Activated T-helper 1 cell treated with anti-CD3 and anti-CD28 coated beads, Interleukin-12 subunit alpha, Interleukin-12 subunit beta, Interleukin-2, Interleukin-4 antibody, amounts not matched to agents 30 ng/mL and 10 ng/mL and 1 ng/mL, durations not matched to agents 14 hours and 24 hours and 36 hours (primary cell): ENCODE measurements at regions of chr4 and their contacts with region 1.

Region 1: GRCh38 chr4:36351082-36351666 is 69.8 kb downstream of the DTHD1 start:
- DNase-seq: peak; percentile 60
- H3K4me3 Mint-ChIP-seq: no peak overlapping the region
- H3K27ac Mint-ChIP-seq: no peak overlapping the region
- H3K4me1 Mint-ChIP-seq: peaks cover 40% of the 10 kb centered on the region
- H3K27me3 Mint-ChIP-seq: peaks cover 2% of the 10 kb centered on the region

Region 2: DNA sequence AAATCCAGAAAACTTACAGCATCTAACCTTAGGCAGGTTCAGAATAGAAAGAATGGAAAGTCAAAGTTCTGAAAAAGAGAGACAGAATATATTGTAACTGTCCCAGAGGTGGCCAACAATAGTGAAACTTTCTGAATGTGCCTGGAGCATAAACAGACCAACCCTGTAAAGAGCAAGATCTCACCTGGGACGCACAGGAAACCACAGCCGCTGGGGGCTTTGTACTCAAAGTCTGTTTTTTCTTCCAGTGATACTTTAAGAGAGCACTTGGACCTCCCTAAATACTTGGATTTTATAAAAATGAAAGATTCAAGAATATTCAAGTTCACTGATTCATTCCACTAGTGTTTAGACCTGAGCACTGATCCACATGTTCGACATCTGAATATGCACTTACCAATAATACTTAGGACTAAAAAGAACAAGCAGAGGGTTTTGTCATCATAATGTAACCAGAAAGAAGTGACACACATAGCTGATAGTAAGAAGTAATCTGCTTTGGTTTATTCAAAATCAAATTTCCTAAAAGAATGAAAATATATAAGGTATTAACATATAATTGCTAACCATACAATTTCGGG is 142.2 kb before region 1 on chr4:
- intact Hi-C with region 1: loop called (anchors 1 kb)
- DNase-seq: peak; percentile 10
- H3K4me3 Mint-ChIP-seq: peak overlapping the region; percentile 56
- H3K27ac Mint-ChIP-seq: peak overlapping the region; percentile 70
- H3K4me1 Mint-ChIP-seq: peaks cover 64% of the 10 kb centered on the region
- H3K27me3 Mint-ChIP-seq: no peaks in the 10 kb centered on the region

Region 3: GRCh38 chr4:36278789-36279188 is 72.4 kb before region 1 on chr4:
- intact Hi-C with region 1: loop called (anchors 1 kb)
- DNase-seq: no peak
- H3K4me3 Mint-ChIP-seq: peak overlapping the region; percentile 72
- H3K27ac Mint-ChIP-seq: peak overlapping the region; percentile 82
- H3K4me1 Mint-ChIP-seq: peaks cover 75% of the 10 kb centered on the region
- H3K27me3 Mint-ChIP-seq: no peaks in the 10 kb centered on the region

Region 4: DNA sequence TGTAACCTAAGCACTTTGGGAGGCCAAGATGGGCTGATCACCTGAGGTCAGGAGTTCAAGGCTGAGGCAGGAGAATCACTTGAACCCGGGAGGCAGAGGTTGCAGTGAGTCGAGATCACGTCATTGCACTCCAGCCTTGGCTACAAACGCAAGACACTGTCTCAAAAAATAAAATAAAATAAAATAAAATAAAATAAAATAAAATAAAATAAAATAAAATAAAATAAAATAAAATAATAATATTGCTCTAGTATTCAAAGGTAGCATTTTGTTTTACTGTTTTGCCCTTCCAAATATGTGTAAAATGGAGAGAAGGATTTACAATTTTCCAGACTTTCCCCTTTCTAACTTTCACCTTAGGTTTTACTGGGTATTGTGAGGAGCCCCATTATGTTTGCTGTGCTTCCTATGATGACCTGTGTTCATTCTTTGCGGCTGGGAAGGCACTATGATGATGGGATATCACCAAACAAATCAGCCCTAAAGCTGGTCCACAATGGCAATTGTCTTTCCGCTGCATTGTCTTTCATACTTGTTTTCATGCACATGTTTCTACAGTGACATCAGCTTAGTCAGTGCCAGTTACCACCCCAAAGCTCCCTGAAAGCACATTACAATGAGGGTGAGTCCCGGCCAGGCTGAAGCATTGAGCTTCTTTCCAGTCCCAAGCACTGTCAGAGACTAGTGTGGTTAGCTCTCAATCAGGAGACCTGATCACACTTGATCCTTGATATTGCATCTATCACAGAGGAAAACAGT is 19.0 kb before region 1 on chr4:
- intact Hi-C with region 1: loop called (anchors 1 kb)
- DNase-seq: no peak
- H3K4me3 Mint-ChIP-seq: no peak overlapping the region
- H3K27ac Mint-ChIP-seq: peak overlapping the region; percentile 66
- H3K4me1 Mint-ChIP-seq: peaks cover 35% of the 10 kb centered on the region
- H3K27me3 Mint-ChIP-seq: no peaks in the 10 kb centered on the region

Region 5: DNA sequence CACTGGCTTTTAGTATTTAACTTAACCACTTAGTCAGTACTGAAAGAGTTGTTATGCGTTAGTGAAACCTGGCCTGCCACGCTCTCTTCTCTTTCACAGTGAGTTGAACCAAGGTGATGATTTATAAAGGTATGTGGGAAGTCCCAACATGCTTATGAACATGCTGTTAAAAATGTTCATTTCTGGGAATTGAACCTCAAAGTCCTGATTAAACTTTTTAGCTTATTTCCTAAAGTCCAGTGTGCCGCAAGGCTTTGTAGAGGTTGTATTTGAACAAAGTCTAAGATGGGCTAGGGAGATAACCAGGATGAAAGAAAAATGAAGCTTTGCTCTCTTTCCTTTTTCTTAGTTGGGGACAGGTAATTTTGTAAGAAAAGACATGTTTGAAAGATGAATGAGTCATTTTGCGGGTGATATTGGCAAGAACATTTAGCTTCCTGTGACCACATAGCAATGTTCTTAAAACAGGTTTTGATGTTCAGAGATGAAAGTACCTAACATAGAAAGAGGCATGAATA is 200.6 kb after region 1 on chr4:
- intact Hi-C with region 1: loop called (anchors 5 kb)
- DNase-seq: no peak
- H3K4me3 Mint-ChIP-seq: no peak overlapping the region
- H3K27ac Mint-ChIP-seq: peak overlapping the region; percentile 28
- H3K4me1 Mint-ChIP-seq: peaks cover 7% of the 10 kb centered on the region
- H3K27me3 Mint-ChIP-seq: no peaks in the 10 kb centered on the region

Region 6: GRCh38 chr4:37389967-37390580 is 1038.9 kb after region 1 on chr4:
- intact Hi-C with region 1: loop called (anchors 1 kb)
- DNase-seq: no peak
- H3K4me3 Mint-ChIP-seq: no peak overlapping the region
- H3K27ac Mint-ChIP-seq: no peak overlapping the region
- H3K4me1 Mint-ChIP-seq: peaks cover 14% of the 10 kb centered on the region
- H3K27me3 Mint-ChIP-seq: peaks cover 2% of the 10 kb centered on the region